B cell (primary cell): ENCODE measurements at regions of chr3 and their contacts with region 1.

Region 1: GRCh38 chr3:112136959-112137693 is 4.1 kb upstream of the GCSAM start:
- DNase-seq: peak; percentile 70
- ATAC-seq: no peak
- H3K4me3 ChIP-seq: no peak overlapping the region
- H3K4me3 Mint-ChIP-seq: peak overlapping the region; percentile 13
- H3K27ac ChIP-seq: no peak overlapping the region
- H3K27ac Mint-ChIP-seq: peak overlapping the region; percentile 15
- H3K4me1 ChIP-seq: peaks cover 51 to 52% of the 10 kb centered on the region in 2 donors
- H3K4me1 Mint-ChIP-seq: peaks cover 56% of the 10 kb centered on the region
- H3K27me3 ChIP-seq: no peaks in the 10 kb centered on the region
- H3K27me3 Mint-ChIP-seq: no peaks in the 10 kb centered on the region
- CTCF ChIP-seq: peak; percentile 75

Region 2: DNA sequence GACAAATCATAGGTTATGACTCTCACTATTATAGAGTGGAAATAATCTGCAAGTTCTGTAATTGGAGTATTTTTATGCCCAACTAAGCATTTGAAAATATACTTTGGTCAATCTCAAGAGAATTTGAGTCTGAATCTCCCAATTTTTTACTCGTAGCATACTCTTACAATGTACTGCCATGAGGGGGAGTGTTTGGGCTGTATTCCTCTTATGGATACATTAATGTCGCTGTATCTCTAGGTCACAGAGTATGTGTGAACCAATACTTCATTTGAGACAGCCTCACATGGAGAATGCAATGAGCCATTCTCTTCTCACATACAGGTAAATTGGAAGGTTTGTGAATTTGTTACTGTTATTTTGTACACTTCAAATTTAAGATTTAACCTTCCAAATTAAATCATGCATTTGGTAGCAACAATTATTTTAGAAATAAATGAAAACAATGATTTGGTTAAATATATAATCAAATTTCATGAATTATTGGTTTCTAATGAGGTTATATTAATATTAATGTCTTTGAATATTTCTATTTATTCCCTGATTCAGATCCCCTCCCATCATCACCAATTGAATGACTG is 190.3 kb after region 1 on chr3:
- CTCF ChIA-PET with region 1: interaction called, 17 read pairs
- POLR2A ChIA-PET with region 1: no interaction called
- intact Hi-C with region 1: no loop called
- DNase-seq: peak; percentile 80
- ATAC-seq: peak; percentile 99
- H3K4me3 ChIP-seq: no peak overlapping the region
- H3K4me3 Mint-ChIP-seq: no peak overlapping the region
- H3K27ac ChIP-seq: no peak overlapping the region
- H3K27ac Mint-ChIP-seq: no peak overlapping the region
- H3K4me1 ChIP-seq: peaks cover 1 to 3% of the 10 kb centered on the region in 2 donors
- H3K4me1 Mint-ChIP-seq: peaks cover 8% of the 10 kb centered on the region
- H3K27me3 ChIP-seq: no peaks in the 10 kb centered on the region
- H3K27me3 Mint-ChIP-seq: no peaks in the 10 kb centered on the region
- CTCF ChIP-seq: peak; percentile 88

Region 3: GRCh38 chr3:112473212-112473640 is 336.1 kb after region 1 on chr3:
- CTCF ChIA-PET with region 1: interaction called, 3 read pairs
- POLR2A ChIA-PET with region 1: no interaction called
- intact Hi-C with region 1: loop called (anchors 5 kb)
- DNase-seq: peak; percentile 80
- ATAC-seq: peak; percentile 87
- H3K4me3 ChIP-seq: peak overlapping the region in 2 of 5 experiments; percentile 36 to 41
- H3K4me3 Mint-ChIP-seq: peak overlapping the region; percentile 84
- H3K27ac ChIP-seq: peak overlapping the region; percentile 66
- H3K27ac Mint-ChIP-seq: peak overlapping the region; percentile 96
- H3K4me1 ChIP-seq: peaks cover 76 to 80% of the 10 kb centered on the region in 2 donors
- H3K4me1 Mint-ChIP-seq: peaks cover 81% of the 10 kb centered on the region
- H3K27me3 ChIP-seq: no peaks in the 10 kb centered on the region
- H3K27me3 Mint-ChIP-seq: no peaks in the 10 kb centered on the region
- CTCF ChIP-seq: no peak

Region 4: GRCh38 chr3:112531358-112531781 is 394.2 kb after region 1 on chr3:
- CTCF ChIA-PET with region 1: interaction called, 14 read pairs
- POLR2A ChIA-PET with region 1: interaction called, 6 read pairs
- intact Hi-C with region 1: loop called (anchors 1 kb)
- DNase-seq: peak; percentile 57
- ATAC-seq: no peak
- H3K4me3 ChIP-seq: no peak overlapping the region
- H3K4me3 Mint-ChIP-seq: no peak overlapping the region
- H3K27ac ChIP-seq: peak overlapping the region in 1 of 2 donors; percentile 18
- H3K27ac Mint-ChIP-seq: peak overlapping the region; percentile 22
- H3K4me1 ChIP-seq: no peaks in the 10 kb centered on the region
- H3K4me1 Mint-ChIP-seq: peaks cover 5% of the 10 kb centered on the region
- H3K27me3 ChIP-seq: no peaks in the 10 kb centered on the region
- H3K27me3 Mint-ChIP-seq: no peaks in the 10 kb centered on the region
- CTCF ChIP-seq: peak; percentile 82